Prostate gland (tissue), 2 donors: ENCODE measurements at regions of chr17 and their contacts with region 1.

Region 1: GRCh38 chr17:32006957-32007462 is at the start of gene LRRC37B:
- DNase-seq: peak; percentile 89
- H3K4me3 ChIP-seq: peak within 1 kb of the TSS; percentile 78 to 96
- H3K27ac ChIP-seq: peak within 1 kb of the TSS; percentile 85 to 90
- H3K4me1 ChIP-seq: no peaks in the 10 kb centered on the region
- H3K27me3 ChIP-seq: no peaks in the 10 kb centered on the region
- CTCF ChIP-seq: peak; percentile 92 to 96 (median 94)
- POLR2A ChIP-seq: peak; percentile 51
- total RNA-seq, gene LRRC37B: 8.7 to 23.6 TPM

Region 2: DNA sequence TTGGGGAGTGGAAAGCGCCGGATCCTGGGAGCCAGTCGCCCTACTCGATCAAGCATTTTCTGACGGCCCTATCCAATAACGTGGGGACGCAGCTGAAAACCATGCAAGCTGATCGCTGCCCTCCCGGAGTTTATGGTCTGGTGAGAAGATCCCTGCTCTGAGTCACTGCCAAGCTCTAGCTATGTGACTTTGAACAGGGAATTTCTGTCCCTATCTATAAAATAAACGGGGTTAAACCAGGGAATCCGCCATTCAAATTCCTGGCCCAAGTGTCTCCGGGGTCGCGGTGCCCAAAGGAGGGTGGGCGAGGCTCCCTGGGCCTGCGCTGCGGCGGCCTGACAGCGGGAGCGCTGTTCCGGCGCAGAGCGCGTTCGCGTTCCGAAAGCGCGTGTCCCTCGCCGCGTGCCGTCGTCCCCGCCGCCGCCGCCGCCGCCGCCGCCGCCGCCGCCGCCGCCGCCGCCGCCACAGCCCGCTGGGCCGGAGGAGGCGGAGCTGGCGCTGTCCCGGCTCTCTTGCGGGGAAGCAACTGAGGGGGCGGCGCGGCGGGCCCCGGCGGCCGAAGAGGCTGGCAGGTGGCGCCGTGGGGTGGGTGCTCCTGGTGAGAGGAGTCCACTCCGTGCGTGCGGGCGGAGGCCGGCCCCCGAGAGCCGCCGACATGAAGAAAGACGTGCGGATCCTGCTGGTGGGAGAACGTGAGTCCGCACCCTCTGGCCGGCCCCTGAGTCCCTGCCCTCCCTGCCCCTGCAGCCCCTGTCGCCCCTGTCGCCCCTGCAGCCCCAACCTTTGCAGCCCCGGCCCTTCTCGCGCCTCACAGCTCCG is 135.2 kb after region 1 on chr17 and contains the start of gene RHOT1:
- intact Hi-C with region 1: loop called (anchors 5 kb)
- DNase-seq: peak; percentile 60
- H3K4me3 ChIP-seq: peak within 1 kb of the TSS; percentile 87 to 89
- H3K27ac ChIP-seq: peak within 1 kb of the TSS; percentile 90 to 92
- H3K4me1 ChIP-seq: no peaks in the 10 kb centered on the region
- H3K27me3 ChIP-seq: no peaks in the 10 kb centered on the region
- CTCF ChIP-seq: peak in 3 of 4 experiments; percentile 31 to 76 (median 61)
- POLR2A ChIP-seq: no peak
- total RNA-seq, gene RHOT1: 31.7 to 60.8 TPM